CD4-positive, alpha-beta T cell (primary cell): ENCODE measurements at regions of chr5 and their contacts with region 1.

Region 1: DNA sequence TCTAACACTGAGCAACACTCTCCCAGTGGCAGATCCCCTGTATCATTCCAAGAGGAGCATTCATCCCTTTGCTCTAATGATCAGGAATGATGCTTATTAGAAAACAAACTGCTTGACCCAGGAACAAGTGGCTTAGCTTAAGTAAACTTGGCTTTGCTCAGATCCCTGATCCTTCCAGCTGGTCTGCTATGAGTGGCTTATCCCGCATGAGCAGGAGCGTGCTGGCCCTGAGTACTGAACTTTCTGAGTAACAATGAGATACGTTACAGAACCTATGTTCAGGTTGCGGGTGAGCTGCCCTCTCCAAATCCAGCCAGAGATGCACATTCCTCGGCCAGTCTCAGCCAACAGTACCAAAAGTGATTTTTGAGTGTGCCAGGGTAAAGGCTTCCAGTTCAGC is 29.7 kb downstream of the GABRP start:
- DNase-seq: no peak
- ATAC-seq: no peak
- H3K4me3 ChIP-seq: no peak overlapping the region
- H3K4me3 Mint-ChIP-seq: no peak overlapping the region
- H3K27ac ChIP-seq: no peak overlapping the region
- H3K27ac Mint-ChIP-seq: no peak overlapping the region
- H3K4me1 ChIP-seq: no peaks in the 10 kb centered on the region
- H3K4me1 Mint-ChIP-seq: no peaks in the 10 kb centered on the region
- H3K27me3 ChIP-seq: no peaks in the 10 kb centered on the region
- H3K27me3 Mint-ChIP-seq: peaks cover 10% of the 10 kb centered on the region
- CTCF ChIP-seq: no peak

Region 2: GRCh38 chr5:169426784-169427183 is 1386.4 kb before region 1 on chr5:
- CTCF ChIA-PET with region 1: no interaction called
- POLR2A ChIA-PET with region 1: no interaction called
- intact Hi-C with region 1: loop called in 1 of 2 experiments (anchors 5 kb)
- DNase-seq: no peak
- ATAC-seq: no peak
- H3K4me3 ChIP-seq: no peak overlapping the region
- H3K4me3 Mint-ChIP-seq: no peak overlapping the region
- H3K27ac ChIP-seq: no peak overlapping the region
- H3K27ac Mint-ChIP-seq: no peak overlapping the region
- H3K4me1 ChIP-seq: no peaks in the 10 kb centered on the region
- H3K4me1 Mint-ChIP-seq: no peaks in the 10 kb centered on the region
- H3K27me3 ChIP-seq: no peaks in the 10 kb centered on the region
- H3K27me3 Mint-ChIP-seq: no peaks in the 10 kb centered on the region
- CTCF ChIP-seq: no peak

Region 3: GRCh38 chr5:170701334-170701733 is 111.9 kb before region 1 on chr5:
- CTCF ChIA-PET with region 1: no interaction called
- POLR2A ChIA-PET with region 1: no interaction called
- intact Hi-C with region 1: no loop called
- DNase-seq: no peak
- ATAC-seq: no peak
- H3K4me3 ChIP-seq: no peak overlapping the region
- H3K4me3 Mint-ChIP-seq: no peak overlapping the region
- H3K27ac ChIP-seq: no peak overlapping the region
- H3K27ac Mint-ChIP-seq: no peak overlapping the region
- H3K4me1 ChIP-seq: no peaks in the 10 kb centered on the region
- H3K4me1 Mint-ChIP-seq: no peaks in the 10 kb centered on the region
- H3K27me3 ChIP-seq: peaks cover 0 to 8% of the 10 kb centered on the region in 2 experiments
- H3K27me3 Mint-ChIP-seq: peaks cover 45% of the 10 kb centered on the region
- CTCF ChIP-seq: no peak

Region 4: GRCh38 chr5:170963521-170963920 is 150.3 kb after region 1 on chr5:
- CTCF ChIA-PET with region 1: no interaction called
- POLR2A ChIA-PET with region 1: no interaction called
- intact Hi-C with region 1: no loop called
- DNase-seq: no peak
- ATAC-seq: no peak
- H3K4me3 ChIP-seq: no peak overlapping the region
- H3K4me3 Mint-ChIP-seq: no peak overlapping the region
- H3K27ac ChIP-seq: no peak overlapping the region
- H3K27ac Mint-ChIP-seq: no peak overlapping the region
- H3K4me1 ChIP-seq: no peaks in the 10 kb centered on the region
- H3K4me1 Mint-ChIP-seq: no peaks in the 10 kb centered on the region
- H3K27me3 ChIP-seq: no peaks in the 10 kb centered on the region
- H3K27me3 Mint-ChIP-seq: no peaks in the 10 kb centered on the region
- CTCF ChIP-seq: no peak